AG04449 (cell line): ENCODE measurements at regions of chr1 and their contacts with region 1.

Region 1: GRCh38 chr1:64194168-64195080 is 9.0 kb upstream of the UBE2U start:
- DNase-seq: no peak
- H3K4me3 ChIP-seq: no peak overlapping the region
- CTCF ChIP-seq: no peak

Region 2: GRCh38 chr1:64184003-64184440 is 10.4 kb before region 1 on chr1:
- CTCF ChIA-PET with region 1: interaction called, 16 read pairs
- POLR2A ChIA-PET with region 1: no interaction called
- DNase-seq: no peak
- H3K4me3 ChIP-seq: no peak overlapping the region
- CTCF ChIP-seq: no peak

Region 3: GRCh38 chr1:64295561-64295960 is 101.1 kb after region 1 on chr1:
- CTCF ChIA-PET with region 1: no interaction called
- POLR2A ChIA-PET with region 1: no interaction called
- DNase-seq: no peak
- H3K4me3 ChIP-seq: no peak overlapping the region
- CTCF ChIP-seq: no peak

Region 4: DNA sequence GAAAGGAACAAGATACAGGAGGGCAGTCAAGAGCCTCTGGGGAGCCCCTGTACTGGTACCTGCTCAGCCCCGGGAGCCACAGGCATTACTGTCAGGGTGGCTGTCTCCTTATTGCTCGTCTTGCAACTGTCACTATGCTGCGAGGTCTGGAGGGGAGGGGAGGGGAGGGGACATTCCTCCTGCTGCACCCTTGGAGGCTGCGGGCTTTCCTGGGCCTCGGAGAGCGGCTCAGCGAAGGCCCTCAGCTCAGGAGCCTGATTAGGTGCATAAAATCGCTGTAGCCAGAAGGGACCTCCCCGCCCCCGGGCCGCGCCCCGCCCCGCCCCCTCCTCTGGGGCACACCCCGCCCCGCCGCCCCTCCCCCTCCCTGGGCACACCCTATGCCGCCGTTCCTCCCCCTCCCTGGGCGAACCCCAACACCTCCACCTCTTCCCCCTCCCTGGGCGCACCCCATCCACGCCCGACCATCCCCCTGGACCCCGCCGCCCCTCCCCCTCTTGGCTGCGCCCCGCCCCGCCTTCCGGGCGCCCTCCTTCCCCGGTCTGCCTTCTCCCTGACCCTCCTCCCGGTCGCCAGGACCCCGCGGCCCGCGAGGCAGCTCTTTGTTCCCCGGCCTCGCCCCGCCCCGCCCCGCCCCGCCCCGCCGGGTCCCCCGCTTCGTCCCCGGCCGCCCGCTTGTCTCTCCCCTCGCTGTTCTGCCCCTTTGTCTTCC is 311.0 kb after region 1 on chr1:
- CTCF ChIA-PET with region 1: no interaction called
- POLR2A ChIA-PET with region 1: no interaction called
- DNase-seq: no peak
- H3K4me3 ChIP-seq: peak overlapping the region; percentile 52
- CTCF ChIP-seq: no peak